Left colon (tissue), 2 donors: ENCODE measurements at regions of chr21 and their contacts with region 1.

Region 1: DNA sequence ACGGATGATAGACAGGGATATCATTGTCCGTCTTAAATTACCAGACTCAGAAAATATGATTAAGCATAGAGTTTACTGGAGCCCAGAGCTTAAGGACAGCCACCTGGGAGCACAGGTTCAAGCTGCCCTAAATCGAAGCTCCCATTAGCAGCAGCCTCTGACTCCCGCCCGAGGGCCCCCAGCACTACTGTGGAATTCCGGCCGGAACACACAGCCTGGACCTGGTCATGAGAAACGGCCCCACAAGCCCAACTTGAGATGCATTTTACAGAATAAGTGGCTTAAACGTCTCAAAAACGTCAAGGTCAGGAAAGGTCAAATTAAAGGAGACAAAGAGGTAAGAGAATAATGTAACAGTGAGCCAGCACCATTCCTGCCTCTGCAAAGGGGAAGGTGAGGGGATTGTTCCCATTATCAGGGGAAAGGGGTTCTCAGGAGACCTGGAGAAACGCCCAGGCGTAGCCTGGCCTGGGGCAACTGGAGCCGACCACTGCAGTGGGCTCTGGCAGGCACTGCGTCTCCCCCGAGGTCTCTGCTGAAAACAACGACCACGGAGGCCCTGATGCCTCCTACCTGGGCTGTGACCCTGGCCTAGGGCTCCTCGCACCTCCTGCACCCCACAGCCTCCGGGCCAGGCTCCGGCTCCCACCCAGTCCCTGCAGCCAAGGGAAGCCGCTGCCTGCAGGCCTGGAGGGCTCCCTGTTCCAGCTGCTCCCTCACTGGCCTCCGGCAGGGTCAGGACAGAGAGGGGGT is 11.5 kb upstream of the COL6A1 start:
- DNase-seq: no peak
- ATAC-seq: no peak

Region 2: DNA sequence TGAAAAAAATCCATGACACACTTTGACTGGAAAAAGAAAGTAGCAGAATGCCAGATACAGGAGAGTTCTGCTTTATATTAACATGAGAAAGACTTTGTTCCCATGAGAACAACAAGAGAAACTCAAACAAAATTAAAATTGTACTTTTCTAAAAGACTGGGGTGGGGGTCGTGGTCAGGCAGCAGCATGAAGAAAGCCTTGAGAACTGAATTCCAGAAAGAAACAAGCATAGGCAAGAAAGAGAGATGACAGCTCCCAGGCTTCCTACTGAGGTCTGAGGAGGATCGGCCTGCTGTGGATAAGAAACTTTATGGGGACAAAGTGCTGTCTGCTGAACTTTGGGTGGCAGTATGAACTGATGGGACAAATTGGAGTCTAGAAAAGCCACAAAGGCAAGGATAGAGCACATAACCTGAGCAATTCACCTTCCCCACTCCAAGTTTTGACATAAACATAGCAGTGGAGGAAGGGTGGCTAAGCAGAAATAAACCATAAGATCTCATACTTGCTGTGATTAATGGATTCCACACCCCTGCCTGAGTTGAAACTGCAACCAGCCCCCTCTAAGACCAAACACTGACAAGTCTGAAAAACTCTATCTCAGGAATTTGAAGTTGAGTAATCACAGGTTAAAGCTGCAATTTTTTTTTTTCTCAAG is 55.1 kb after region 1 on chr21:
- intact Hi-C with region 1: no loop called
- DNase-seq: no peak
- ATAC-seq: peak; percentile 45

Region 3: GRCh38 chr21:46100426-46100825 is 130.3 kb after region 1 on chr21:
- intact Hi-C with region 1: loop called in 1 of 2 experiments (anchors 5 kb)
- DNase-seq: peak; percentile 0 to 5
- ATAC-seq: no peak

Region 4: DNA sequence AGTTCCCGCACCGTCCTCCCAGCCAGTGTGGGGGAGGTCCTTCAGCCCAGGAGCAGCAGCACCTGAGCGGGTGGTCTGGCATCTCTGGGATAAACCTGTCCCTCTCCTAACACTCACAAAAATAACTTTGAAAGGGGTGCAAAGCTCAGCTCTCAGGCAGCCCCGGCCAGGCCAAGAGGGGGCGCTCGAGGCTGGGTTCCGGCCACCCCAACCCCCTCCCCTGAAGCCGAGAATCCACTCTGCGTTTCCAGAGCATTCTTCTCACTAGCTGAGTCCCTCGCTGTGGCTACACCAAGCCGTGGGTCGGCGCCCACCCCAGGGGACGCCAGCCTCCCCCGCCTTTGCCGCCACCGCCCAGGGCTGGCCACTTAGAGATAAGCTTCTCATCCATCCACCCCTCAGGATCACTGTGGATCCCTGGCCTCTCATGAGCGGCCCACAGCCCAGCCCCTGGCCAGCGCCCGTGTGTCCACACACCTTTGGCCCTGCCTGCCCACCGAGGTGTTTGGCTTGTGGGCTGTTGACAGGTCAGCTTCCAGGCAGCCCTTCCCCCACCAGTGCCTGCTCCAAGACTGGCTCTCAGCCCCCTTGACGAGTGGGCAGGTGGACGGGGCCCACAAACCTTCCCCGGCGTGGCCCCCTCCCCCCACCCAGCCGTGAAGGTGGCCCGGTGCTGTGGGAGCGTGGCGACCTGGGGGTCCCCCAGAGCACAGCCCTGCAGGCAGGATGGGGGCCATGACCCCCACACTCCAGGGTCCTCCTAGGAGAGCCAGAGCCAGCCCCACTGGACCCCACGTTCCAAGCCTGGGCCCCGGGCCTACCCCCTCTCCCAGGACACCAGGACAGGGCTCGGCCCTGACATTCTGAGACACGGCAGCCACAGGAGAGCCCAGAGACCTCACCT is 183.4 kb after region 1 on chr21:
- intact Hi-C with region 1: no loop called
- DNase-seq: peak in 1 of 2 donors; percentile 71
- ATAC-seq: peak; percentile 79